ENCODE measurements at regions of chr2 and their contacts with region 1.

Region 1: GRCh38 chr2:15177103-15177502 is 384.0 kb downstream of the NBAS start:
- DNase-seq: peak; percentile 85
- H3K4me3 Mint-ChIP-seq: no peak overlapping the region
- H3K27ac Mint-ChIP-seq: no peak overlapping the region
- H3K4me1 Mint-ChIP-seq: peaks cover 51% of the 10 kb centered on the region
- H3K27me3 Mint-ChIP-seq: peaks cover 19% of the 10 kb centered on the region

Region 2: DNA sequence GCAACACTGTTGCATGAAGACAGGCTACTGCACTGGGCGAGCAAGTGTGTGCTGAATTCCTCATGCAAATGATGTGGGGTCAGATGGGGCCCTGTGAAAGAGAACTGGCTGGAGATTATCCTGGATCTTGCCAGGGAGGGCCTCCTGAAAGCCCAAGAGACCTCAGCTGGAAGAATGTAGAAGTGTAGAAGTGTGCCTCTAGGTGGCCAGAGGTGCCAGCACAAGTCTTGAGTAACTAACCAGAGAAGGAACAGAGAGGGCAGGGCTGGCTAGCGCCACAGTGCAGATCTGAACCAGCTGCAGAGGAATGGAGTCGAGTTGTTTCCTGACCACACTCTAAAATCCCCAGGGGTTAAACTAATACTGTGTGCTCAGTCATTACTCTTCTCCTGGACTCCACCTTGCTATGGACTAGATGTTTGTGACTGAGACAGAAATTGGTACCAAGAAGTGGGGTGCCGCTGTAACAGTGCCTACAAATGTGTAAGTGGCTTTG is 145.3 kb before region 1 on chr2:
- CTCF ChIA-PET with region 1: no interaction called
- intact Hi-C with region 1: no loop called
- DNase-seq: no peak
- H3K4me3 Mint-ChIP-seq: no peak overlapping the region
- H3K27ac Mint-ChIP-seq: no peak overlapping the region
- H3K4me1 Mint-ChIP-seq: no peaks in the 10 kb centered on the region
- H3K27me3 Mint-ChIP-seq: peaks cover 11% of the 10 kb centered on the region

Region 3: GRCh38 chr2:15191801-15192200 is 14.7 kb after region 1 on chr2:
- CTCF ChIA-PET with region 1: no interaction called
- intact Hi-C with region 1: loop called (anchors 1 kb)
- DNase-seq: no peak
- H3K4me3 Mint-ChIP-seq: no peak overlapping the region
- H3K27ac Mint-ChIP-seq: no peak overlapping the region
- H3K4me1 Mint-ChIP-seq: peaks cover 2% of the 10 kb centered on the region
- H3K27me3 Mint-ChIP-seq: no peaks in the 10 kb centered on the region

Region 4: DNA sequence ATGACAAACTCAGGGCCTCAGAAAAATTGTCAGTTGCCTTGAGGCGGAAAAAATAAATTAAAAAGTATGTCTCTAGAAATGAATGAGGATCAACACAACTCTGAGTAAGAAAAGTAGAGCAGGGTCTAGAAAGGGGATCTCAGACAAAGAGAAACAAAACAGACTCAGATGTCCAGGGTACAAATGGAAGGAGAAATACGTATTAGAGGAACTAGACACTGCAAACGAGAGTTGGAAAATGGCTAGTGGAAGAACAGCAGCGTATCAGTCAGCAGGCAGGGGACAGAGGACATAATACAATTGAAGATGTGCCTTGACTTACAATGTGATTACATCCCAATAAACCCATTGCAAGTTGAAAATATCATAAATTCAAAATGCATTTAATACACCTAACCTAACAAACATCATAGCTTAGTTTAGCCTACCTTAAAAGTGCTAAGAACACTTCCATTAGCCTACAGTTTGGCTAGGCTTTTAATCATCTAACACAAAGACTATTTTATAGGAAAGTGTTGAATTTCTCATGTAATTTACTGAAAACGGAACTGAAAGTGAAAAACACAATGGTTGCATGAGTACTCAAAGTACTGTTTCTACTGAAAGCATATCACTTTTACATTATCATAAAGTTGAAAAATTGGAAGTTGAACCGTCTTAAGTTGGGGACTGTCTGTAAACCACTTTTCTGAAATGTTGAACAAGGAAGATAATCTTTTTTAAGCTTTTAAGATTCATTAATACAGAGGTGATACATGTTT is 201.2 kb after region 1 on chr2:
- CTCF ChIA-PET with region 1: no interaction called
- intact Hi-C with region 1: loop called (anchors 1 kb)
- DNase-seq: no peak
- H3K4me3 Mint-ChIP-seq: no peak overlapping the region
- H3K27ac Mint-ChIP-seq: no peak overlapping the region
- H3K4me1 Mint-ChIP-seq: peaks cover 13% of the 10 kb centered on the region
- H3K27me3 Mint-ChIP-seq: no peaks in the 10 kb centered on the region

Region 5: GRCh38 chr2:15568874-15569273 is 391.8 kb after region 1 on chr2:
- CTCF ChIA-PET with region 1: no interaction called
- intact Hi-C with region 1: no loop called
- DNase-seq: no peak
- H3K4me3 Mint-ChIP-seq: no peak overlapping the region
- H3K27ac Mint-ChIP-seq: no peak overlapping the region
- H3K4me1 Mint-ChIP-seq: no peaks in the 10 kb centered on the region
- H3K27me3 Mint-ChIP-seq: no peaks in the 10 kb centered on the region

Region 6: GRCh38 chr2:15591692-15592463 is 414.8 kb after region 1 on chr2 and contains the start of gene DDX1:
- CTCF ChIA-PET with region 1: no interaction called
- intact Hi-C with region 1: loop called (anchors 1 kb)
- DNase-seq: peak; percentile 85
- H3K4me3 Mint-ChIP-seq: peak within 1 kb of the TSS; percentile 88
- H3K27ac Mint-ChIP-seq: peak within 1 kb of the TSS; percentile 86
- H3K4me1 Mint-ChIP-seq: peaks cover 36% of the 10 kb centered on the region
- H3K27me3 Mint-ChIP-seq: no peaks in the 10 kb centered on the region
- total RNA-seq, gene DDX1: 61.7 to 64.1 TPM

Region 7: DNA sequence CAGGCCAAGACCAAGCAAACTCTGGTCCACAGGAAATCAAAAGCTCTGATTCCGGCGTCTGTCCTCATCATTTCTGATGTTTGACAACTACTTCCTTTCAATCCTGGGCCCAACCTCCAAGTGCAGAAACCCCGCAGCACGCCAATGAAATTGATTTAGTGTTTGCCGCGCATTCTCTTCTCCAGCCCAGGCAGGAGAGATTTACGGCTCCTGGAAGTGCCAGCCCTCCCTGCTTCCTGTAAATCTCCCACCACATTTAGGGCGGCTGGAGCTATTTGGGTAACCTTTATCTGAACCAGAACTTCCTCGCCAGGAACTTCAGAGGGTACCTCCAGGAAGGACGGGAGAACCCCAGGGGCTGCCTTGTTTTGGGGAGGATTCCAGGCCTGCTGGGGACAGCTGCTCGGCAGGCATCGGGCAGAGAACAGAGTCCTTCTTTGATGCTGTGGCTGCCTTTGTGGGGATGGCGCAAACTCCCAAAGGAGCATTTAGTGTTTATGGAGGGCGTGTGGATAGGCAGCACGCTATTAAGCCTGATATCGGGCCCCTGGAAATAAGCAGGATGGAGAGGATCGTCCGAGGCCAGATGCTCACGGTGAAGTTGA is 641.2 kb after region 1 on chr2:
- CTCF ChIA-PET with region 1: no interaction called
- intact Hi-C with region 1: no loop called
- DNase-seq: no peak
- H3K4me3 Mint-ChIP-seq: no peak overlapping the region
- H3K27ac Mint-ChIP-seq: no peak overlapping the region
- H3K4me1 Mint-ChIP-seq: no peaks in the 10 kb centered on the region
- H3K27me3 Mint-ChIP-seq: peaks cover 38% of the 10 kb centered on the region

Measured in activated naive CD4-positive, alpha-beta T cell treated with anti-CD3 and anti-CD28 coated beads for 36 hours (primary cell).